ENCODE measurements at regions of chr6 and their contacts with region 1.

Region 1: DNA sequence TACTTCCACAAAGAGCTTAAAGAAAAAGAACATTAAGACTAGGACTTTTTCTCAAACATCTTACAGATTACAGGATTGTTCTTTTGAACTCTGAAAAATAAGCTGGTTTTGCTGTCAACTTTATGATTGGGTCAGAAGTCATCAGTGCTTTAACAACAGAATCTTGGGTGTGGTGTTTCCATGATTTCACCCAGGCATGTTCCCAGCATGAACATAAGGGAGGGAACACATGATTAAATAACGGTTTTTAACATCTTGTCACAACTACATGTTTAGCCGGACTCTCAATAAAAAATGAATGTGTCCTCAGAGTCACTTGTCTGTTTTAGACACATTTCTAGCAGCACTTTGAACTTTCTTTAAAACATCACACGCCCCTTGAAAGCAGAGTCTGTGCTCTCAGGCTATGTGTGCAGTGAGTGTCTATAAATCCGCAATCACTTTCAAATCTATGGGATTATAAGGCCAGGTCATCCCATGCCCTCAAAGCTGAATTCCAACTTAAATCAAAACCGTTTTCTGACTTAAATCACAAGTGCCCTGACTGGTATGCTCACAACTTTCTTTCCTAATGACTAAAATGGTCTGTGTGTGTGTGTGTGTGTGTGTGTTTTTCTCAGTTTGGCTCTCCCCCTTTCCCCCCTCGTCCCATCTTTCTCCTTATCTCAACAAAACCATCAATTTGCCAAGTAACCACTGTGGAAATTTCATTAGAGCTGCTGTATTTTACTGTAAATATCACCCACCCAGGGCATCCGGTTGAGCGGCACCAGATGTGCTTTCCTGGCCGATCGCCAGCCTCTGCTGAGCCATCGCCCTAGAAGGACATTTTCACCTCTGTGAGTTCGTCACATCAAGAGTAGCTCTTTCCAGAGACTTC is 216.8 kb upstream of the DTNBP1 start:
- DNase-seq: peak; percentile 85
- H3K4me3 Mint-ChIP-seq: peak overlapping the region; percentile 33
- H3K27ac Mint-ChIP-seq: peak overlapping the region; percentile 76
- H3K4me1 Mint-ChIP-seq: peaks cover 42% of the 10 kb centered on the region
- H3K27me3 Mint-ChIP-seq: peaks cover 4% of the 10 kb centered on the region

Region 2: GRCh38 chr6:15715060-15715459 is 164.6 kb before region 1 on chr6:
- CTCF ChIA-PET with region 1: interaction called, 3 read pairs
- POLR2A ChIA-PET with region 1: no interaction called
- intact Hi-C with region 1: loop called (anchors 1 kb)
- DNase-seq: peak; percentile 70
- H3K4me3 Mint-ChIP-seq: no peak overlapping the region
- H3K27ac Mint-ChIP-seq: peak overlapping the region; percentile 54
- H3K4me1 Mint-ChIP-seq: peaks cover 21% of the 10 kb centered on the region
- H3K27me3 Mint-ChIP-seq: peaks cover 14% of the 10 kb centered on the region

Region 3: DNA sequence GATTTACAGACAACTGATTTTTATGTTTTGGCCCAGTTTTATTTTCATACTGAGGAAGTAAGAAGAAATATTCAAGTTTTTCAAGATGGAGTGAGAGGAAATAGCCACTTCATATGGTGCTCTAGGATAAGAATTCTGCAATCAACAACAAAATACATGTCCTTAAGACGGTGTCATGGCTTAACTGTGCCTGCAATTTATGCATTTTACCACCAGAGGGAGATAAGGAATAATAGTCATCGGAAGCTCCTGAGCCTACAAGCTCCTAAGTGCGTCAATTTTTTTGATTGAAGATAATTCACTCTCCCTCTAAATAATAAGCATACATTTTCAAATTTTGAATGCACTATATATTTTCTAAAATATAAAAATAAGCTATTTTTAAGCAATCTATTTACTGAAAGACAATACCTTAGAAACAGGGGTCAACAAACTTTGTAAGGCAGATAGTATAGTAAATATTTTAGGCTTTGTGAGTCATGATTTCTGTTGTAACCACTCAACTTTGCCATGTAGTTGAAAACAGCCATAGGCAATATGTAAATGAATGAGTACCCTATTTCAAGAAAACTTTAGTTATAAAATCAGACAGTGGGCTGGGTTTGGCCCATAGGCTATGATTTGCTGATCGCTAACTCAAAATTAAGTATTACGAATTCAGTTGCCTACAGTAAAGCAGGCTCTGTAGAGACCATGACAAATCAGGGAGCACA is 14.1 kb after region 1 on chr6:
- CTCF ChIA-PET with region 1: interaction called, 12 read pairs
- POLR2A ChIA-PET with region 1: no interaction called
- intact Hi-C with region 1: no loop called
- DNase-seq: no peak
- H3K4me3 Mint-ChIP-seq: no peak overlapping the region
- H3K27ac Mint-ChIP-seq: no peak overlapping the region
- H3K4me1 Mint-ChIP-seq: peaks cover 5% of the 10 kb centered on the region
- H3K27me3 Mint-ChIP-seq: peaks cover 9% of the 10 kb centered on the region

Region 4: DNA sequence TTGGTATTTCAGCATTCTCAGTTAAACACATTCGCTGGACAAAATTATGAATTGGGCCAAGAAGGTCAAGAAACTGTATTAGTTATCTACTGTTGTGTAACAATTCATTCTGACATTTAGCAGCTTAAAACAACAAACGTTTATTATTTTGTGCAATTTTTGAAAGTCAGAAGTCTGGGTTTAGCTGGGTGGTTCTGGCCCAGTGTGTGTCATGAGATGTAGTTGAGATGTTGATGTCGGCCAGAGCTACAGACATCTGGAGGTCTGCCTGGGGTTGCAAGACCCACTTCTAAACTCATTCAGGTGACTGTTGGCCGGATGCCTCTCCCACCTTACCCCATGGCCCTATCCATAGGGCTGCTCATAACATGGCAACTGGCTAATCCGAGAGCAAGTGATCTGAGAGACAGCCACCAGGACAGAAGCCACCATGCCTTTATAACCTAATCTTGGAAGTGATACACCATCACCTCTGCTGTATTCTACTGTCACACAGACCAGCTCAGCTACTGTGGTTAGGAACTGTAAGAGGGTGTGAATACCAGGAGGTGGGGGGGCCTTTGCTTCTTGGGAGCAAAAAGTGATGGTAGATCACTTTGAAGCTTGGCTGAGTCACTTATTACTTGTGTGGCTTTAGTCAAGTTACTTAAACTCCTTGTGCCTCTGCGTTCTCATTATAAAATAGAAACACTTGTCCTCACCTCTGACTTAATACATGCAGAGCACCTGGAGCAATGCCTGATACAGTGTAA is 32.3 kb after region 1 on chr6:
- CTCF ChIA-PET with region 1: interaction called, 3 read pairs
- POLR2A ChIA-PET with region 1: no interaction called
- intact Hi-C with region 1: loop called (anchors 1 kb)
- DNase-seq: peak; percentile 67
- H3K4me3 Mint-ChIP-seq: no peak overlapping the region
- H3K27ac Mint-ChIP-seq: no peak overlapping the region
- H3K4me1 Mint-ChIP-seq: peaks cover 32% of the 10 kb centered on the region
- H3K27me3 Mint-ChIP-seq: no peaks in the 10 kb centered on the region

Region 5: DNA sequence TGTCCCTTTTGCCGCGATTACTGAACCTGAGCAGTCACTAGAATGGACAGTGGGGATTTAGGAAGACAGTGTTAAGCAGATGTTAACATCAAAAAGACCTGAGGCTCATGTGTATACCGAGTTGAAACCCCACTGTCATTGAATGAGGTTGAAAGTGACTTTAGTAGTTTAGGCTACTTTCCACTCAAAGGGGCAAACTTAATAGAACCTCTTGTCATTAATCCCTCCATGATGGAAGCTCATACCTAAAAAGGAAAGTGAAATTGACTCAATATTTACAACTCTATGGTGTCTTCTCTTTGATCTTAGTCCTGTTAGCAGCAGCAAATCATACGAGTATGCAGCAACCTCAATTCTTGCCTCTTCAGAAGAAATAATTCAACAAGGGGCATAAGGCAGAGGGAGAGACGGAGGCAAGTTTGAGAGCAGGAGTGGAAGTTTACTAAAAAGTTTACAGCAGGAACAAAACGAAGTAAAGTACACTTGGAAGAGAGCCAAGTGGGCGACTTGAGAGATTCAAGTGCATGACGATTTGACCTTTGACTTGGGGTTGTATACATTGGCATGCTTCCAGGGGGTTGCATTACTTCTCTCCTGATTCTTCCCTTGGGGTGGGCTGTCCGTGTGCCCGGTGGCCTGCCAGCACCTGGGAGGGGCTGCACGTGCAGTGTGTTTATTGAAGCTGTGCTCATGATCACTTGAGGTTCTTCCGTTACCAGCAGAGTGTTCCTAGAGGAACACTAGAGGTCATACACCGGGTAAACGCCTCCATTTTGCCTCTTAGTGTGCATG is 76.5 kb after region 1 on chr6:
- CTCF ChIA-PET with region 1: no interaction called
- POLR2A ChIA-PET with region 1: no interaction called
- intact Hi-C with region 1: no loop called
- DNase-seq: no peak
- H3K4me3 Mint-ChIP-seq: no peak overlapping the region
- H3K27ac Mint-ChIP-seq: no peak overlapping the region
- H3K4me1 Mint-ChIP-seq: peaks cover 5% of the 10 kb centered on the region
- H3K27me3 Mint-ChIP-seq: no peaks in the 10 kb centered on the region

Measured in activated CD4-positive, alpha-beta memory T cell treated with anti-CD3 and anti-CD28 coated beads for 36 hours (primary cell).